ENCODE measurements at regions of chr2 and their contacts with region 1.

Region 1: GRCh38 chr2:111883661-111884591 is at the start of gene ANAPC1:
- DNase-seq: no peak
- H3K4me3 ChIP-seq: peak within 1 kb of the TSS; percentile 95
- CTCF ChIP-seq: no peak

Region 2: DNA sequence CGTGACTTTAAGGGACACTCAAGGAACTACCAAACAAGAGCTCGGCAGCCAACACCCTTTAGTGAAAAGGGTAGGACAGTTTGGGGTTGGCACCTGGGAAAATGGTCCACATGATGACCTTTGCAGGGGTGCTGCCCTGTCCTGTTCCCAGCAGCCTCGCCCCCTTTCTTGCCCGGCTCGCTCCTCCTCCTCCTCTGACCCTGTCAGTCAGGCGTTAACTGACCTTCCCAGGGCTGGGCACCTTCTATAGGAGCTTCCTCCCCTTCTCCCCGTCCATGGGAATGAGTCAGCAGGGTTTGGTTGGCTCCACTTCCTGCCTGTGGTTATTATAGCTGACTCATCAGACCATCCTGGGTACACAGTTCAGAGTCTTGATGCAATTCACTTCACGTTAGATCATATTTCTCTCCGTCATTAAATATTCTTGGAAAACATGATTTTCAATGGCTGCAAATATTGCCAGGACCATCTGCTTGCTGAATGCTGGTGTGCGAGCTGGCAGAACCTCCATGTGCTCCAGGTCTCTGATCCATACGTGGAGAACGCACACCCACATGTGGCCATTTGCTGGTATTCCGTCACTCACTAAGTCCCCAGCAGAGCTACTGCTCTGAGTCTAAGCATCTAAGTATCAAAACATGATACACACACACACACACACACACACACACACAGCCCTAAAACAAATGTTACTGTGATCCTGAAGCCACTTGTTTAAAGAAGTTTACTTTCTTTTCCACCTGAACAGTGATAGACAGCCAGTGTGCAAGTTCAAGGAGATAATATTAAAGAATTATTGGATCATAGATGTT is 185.0 kb before region 1 on chr2:
- CTCF ChIA-PET with region 1: no interaction called
- POLR2A ChIA-PET with region 1: no interaction called
- DNase-seq: peak; percentile 94
- H3K4me3 ChIP-seq: peak overlapping the region; percentile 20; the same call in 1 of the 2 replicates
- CTCF ChIP-seq: peak; percentile 47

Region 3: DNA sequence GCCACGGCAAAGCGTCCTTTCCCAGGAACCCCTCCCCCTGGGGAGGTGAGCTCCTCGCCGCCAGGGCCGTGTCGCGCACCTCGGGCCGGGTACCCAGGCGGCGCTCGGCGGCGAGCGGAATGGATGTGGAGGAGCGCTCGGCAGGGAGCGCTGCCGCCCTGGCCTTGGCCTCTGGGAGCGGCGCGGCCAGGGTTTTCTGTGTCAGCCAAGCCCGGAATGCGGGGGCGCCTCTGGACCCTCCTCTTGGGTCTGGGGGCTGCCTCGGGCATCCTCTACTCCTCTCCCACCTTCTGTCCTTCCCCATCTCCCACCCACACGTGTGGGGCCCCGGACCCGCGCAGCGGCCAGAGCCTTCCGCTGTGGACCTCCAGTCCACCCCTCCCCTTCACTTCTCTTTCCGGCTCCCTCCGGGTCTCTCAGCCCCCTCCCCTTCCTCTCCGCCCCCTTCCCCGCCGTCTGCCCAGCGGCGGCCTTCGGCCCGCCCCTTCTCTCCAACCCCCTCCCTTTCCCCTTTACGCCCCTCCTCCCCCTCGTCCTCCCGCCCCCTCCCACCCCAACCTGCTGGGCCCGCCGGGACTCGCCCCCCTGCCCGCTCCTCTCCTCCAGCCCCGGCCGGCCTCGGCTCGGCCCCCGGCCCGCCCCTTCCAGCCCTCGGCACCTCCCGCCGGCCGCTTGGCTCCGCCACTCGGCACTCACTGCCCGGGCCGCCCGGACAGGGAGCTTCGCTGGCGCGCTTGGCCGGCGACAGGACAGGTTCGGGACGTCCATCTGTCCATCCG is 14.2 kb after region 1 on chr2 and contains the start of gene MERTK:
- CTCF ChIA-PET with region 1: interaction called, 23 read pairs
- POLR2A ChIA-PET with region 1: no interaction called
- DNase-seq: no peak
- H3K4me3 ChIP-seq: peak within 1 kb of the TSS; percentile 61
- CTCF ChIP-seq: peak; percentile 45

Region 4: DNA sequence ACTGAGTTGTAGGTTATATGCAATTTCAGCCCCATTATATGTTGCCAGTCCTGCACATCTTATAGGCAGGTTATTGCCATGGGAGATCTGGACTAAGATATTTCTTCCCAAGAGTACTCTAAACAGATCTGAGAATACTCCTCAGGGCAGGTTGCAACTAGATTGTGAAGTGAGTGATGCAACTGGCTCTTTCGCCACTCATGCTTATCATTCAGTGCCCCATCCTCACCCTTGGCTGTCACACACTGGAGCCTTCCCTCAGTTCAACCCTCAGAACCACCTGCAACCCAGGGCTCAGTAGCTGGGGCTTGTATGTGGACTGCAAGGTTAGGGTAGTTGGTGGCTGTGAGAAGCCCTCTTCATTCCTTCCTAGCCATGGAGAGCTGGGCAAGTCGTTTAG is 28.6 kb after region 1 on chr2:
- CTCF ChIA-PET with region 1: no interaction called
- POLR2A ChIA-PET with region 1: no interaction called
- DNase-seq: no peak
- H3K4me3 ChIP-seq: no peak overlapping the region
- CTCF ChIP-seq: no peak

Region 5: GRCh38 chr2:112048887-112049286 is 165.0 kb after region 1 on chr2:
- CTCF ChIA-PET with region 1: interaction called, 197 read pairs
- POLR2A ChIA-PET with region 1: no interaction called
- DNase-seq: no peak
- H3K4me3 ChIP-seq: no peak overlapping the region
- CTCF ChIP-seq: peak; percentile 38

Region 6: DNA sequence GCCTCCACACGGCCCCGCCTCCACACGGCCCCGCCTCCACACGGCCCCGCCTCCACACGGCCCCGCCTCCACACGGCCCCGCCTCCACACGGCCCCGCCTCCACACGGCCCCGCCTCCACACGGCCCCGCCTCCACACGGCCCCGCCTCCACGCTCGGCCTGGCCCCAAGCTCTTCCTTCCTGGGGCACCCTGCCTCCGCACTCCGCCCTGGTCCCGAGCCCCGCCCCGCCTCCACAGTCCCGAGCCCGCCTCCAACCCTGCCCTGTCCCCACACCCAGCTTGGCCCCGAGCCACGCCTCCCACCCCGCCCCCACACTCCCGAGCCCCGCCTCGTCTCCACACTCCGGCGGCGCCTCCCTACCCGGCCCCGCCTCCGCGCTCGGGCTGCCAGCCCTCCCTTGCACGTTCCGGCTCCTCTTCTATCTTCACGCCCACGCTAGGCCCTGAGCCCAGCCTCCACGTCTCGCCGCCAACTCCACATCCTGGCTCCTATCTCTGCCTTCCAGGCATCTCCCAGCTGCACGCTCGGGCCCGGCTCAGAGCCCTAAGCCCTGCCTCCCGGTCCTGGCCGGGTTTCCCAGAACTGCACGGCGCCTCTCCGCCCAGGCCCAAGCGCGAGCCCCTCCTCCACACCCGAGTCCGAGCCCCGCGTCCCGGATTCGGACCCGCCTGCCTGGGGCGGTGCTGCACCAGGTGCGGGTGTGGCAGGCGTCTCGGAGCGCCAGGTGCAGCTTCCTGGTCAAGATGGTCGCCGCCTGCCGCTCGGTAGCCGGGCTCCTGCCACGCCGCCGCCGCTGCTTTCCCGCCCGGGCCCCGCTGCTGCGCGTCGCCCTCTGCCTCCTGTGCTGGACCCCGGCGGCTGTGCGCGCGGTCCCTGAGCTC is 171.2 kb after region 1 on chr2 and contains the start of gene TMEM87B:
- CTCF ChIA-PET with region 1: interaction called, 197 read pairs
- POLR2A ChIA-PET with region 1: interaction called, 3 read pairs
- DNase-seq: peak; percentile 80
- H3K4me3 ChIP-seq: peak within 1 kb of the TSS; percentile 88
- CTCF ChIP-seq: no peak

Region 7: DNA sequence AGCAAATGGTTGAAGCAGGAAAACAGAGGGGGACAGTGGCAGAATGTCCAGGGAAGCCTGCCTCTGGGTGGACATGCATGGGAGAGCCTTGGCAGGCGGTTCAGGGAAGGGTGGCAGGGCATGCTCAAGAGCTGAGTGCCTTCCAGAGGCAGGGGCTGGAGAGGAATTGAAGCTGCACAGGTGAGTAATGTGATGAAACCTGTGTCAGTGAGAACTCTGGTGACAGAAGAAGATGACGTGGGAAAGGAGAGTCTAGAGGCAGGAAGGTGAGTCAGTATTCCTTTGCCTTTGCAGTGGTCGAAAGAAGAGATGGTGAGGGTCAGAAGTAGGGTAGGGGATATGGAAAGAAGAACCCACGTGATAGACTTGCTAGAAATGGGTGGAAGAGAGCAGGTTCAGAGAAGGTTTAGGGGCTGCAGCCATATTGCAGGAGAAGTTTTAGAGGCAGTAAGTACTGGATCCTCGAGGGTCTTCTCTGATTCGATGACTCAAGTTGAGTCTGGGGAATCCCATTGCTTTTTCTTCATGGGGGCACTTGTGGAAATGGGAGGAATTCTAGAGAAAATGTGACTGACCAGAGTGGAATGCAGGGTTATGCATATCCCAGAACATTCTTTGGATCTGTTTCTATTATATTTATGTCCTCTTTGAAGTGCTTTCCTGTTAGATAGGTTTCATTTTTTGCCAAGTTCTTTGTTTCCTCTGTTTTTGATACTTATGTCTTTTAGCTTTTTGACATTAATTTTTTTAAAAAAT is 208.5 kb after region 1 on chr2:
- CTCF ChIA-PET with region 1: no interaction called
- POLR2A ChIA-PET with region 1: no interaction called
- DNase-seq: peak; percentile 17
- H3K4me3 ChIP-seq: no peak overlapping the region
- CTCF ChIP-seq: no peak

Region 8: DNA sequence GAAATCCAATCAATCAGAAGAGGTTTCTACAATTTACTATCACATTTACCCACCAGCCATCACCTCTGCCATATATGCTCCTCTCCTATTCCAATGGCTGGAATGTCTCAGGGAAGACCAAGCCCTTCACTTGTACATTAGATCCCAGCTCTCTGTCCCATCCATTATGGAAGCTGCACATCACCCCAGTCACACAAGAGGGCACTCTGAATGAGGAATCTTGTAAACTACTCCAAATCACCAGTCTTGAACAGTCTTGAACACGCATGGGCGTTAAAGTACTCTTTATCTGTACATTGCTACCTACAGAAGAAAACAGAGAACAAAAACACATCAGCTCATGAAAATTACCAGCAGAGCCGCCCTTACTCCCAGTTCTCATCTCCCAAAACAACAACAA is 332.2 kb after region 1 on chr2:
- CTCF ChIA-PET with region 1: no interaction called
- POLR2A ChIA-PET with region 1: no interaction called
- DNase-seq: no peak
- H3K4me3 ChIP-seq: no peak overlapping the region
- CTCF ChIP-seq: peak; percentile 15